ENCODE measurements at regions of chr7 and their contacts with region 1.

Region 1: DNA sequence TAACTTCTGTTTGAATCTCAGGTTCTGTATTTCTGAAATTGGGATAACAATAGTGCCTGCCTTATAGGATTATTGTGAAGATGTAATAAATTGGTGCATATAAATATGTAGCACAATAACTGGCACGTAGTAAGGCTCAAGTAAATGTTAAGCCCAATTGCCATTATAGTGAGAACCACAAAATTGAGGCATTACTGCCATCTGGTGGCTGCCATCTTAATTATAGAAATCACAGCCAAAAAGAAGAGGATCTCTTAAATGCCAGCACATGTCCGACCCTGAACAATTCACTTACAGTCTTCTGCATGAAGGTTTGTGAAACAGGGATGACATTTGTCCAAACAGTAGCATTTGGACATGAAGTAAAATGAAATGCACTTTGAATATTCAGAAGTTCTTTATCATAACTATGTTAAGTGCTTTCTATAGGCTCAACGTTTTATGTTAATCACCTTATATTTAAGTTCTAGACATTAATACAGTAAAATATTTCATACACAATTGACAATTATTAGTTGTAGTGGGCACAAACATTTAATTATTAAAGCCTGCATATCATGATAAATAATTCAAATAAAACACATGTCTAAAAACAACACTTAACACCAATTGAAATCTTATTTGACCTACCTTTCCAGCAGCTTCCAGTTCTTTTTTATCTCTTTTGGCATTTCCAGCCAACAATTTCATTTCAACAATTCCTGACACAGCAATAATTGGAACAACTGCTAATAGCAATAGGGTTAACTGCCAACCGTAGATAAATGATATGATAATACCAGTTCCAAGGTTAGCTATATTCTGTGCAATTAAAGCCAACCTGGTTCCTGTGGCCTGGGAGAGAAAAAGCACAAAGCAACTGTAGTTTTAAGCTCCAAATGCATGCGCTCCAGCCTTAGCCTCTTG is 58.5 kb downstream of the ABCB4 start:
- H3K4me3 ChIP-seq: no peak overlapping the region
- H3K27ac ChIP-seq: no peak overlapping the region
- H3K4me1 ChIP-seq: no peaks in the 10 kb centered on the region
- CTCF ChIP-seq: no peak

Region 2: DNA sequence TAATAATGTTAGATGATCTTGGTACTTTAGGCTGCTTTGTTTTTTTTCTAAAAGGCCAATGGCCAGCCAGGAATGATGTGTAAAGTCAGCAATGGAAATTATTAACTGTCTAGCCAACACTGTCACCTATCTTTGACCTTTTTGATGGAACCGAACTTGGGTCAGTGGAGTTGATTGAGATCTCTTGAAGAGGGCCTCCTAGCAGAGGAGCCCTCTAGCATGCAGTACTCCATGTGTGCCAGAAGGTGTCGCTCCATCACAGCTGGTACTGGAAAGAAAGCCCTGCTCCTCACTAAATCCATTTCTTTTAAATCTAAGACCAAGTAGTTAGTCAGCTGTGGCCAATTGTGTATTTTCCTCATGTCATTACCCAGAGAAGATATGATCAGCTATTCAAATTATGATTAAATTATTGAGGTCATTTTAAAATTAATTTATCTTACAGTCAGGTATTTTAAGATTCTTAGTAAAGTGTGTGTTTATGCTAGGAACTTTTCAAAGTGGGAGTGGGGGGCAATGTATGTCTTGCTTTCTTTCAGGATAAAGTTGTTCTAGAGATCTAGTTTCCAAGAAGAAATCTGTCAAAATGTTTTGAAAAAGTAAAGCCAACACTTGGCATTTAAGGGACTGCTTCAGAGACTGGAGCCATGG is 104.6 kb before region 1 on chr7:
- CTCF ChIA-PET with region 1: interaction called, 163 read pairs
- POLR2A ChIA-PET with region 1: no interaction called
- H3K4me3 ChIP-seq: no peak overlapping the region
- H3K27ac ChIP-seq: no peak overlapping the region
- H3K4me1 ChIP-seq: no peaks in the 10 kb centered on the region; the same call in 1 of the 2 replicates
- CTCF ChIP-seq: peak; percentile 64

Region 3: GRCh38 chr7:87328281-87328680 is 88.7 kb before region 1 on chr7:
- CTCF ChIA-PET with region 1: interaction called, 27 read pairs
- POLR2A ChIA-PET with region 1: no interaction called
- H3K4me3 ChIP-seq: no peak overlapping the region
- H3K27ac ChIP-seq: no peak overlapping the region
- H3K4me1 ChIP-seq: no peaks in the 10 kb centered on the region
- CTCF ChIP-seq: no peak

Region 4: GRCh38 chr7:87370660-87371180 is 46.2 kb before region 1 on chr7:
- CTCF ChIA-PET with region 1: no interaction called
- POLR2A ChIA-PET with region 1: no interaction called
- H3K4me3 ChIP-seq: no peak overlapping the region
- H3K27ac ChIP-seq: no peak overlapping the region
- H3K4me1 ChIP-seq: no peaks in the 10 kb centered on the region
- CTCF ChIP-seq: no peak

Region 5: GRCh38 chr7:87427288-87427687 is 10.4 kb after region 1 on chr7:
- CTCF ChIA-PET with region 1: interaction called, 11 read pairs
- POLR2A ChIA-PET with region 1: no interaction called
- H3K4me3 ChIP-seq: no peak overlapping the region
- H3K27ac ChIP-seq: no peak overlapping the region
- H3K4me1 ChIP-seq: no peaks in the 10 kb centered on the region; the same call in 1 of the 2 replicates
- CTCF ChIP-seq: no peak

Region 6: DNA sequence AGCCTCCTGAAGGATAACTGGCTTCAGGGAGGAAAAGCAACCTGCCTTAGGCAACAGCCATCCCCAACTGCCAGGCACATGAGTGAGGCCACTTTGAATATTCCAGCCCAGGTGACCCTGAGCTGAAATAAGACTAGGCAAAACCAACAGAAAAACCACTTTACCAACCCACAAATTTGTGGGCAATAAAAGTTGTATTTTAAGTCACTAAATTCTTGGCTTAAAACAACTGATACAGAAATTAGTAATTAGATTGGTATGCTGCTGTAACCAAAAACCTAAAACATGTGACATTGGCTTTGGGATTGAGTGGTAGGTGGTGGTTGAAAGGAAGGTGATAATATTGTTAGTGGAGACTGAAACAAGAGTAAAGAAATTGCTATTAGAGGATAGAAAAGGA is 18.6 kb after region 1 on chr7:
- CTCF ChIA-PET with region 1: interaction called, 10 read pairs
- POLR2A ChIA-PET with region 1: no interaction called
- H3K4me3 ChIP-seq: no peak overlapping the region
- H3K27ac ChIP-seq: no peak overlapping the region
- H3K4me1 ChIP-seq: peaks cover 3% of the 10 kb centered on the region; the same call in 1 of the 2 replicates
- CTCF ChIP-seq: no peak